A549 (cell line): ENCODE measurements at regions of chr12 and their contacts with region 1.

Region 1: DNA sequence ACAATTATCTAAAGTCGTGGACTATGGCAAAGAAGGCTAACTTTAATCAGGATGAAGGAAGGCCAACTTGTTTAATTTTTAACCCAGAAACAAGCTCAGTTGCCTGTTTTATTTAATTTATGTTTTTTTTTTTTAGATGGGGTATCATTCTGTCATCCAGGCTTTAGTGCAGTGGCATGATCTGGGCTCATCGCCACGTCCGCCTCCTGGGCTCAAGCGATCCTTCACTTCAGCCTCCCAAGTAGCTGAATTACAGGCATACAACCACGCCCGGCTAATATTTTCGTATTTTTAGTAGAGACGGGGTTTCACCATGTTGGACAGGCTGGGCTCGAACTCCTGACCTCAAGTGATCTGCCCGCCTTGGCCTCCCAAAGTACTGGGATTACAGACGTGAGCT is 19.7 kb downstream of the NUDT4 start:
- DNase-seq: no peak
- ATAC-seq: no peak
- H3K4me3 ChIP-seq: no peak overlapping the region
- H3K27ac ChIP-seq: no peak overlapping the region
- H3K4me1 ChIP-seq: no peaks in the 10 kb centered on the region
- CTCF ChIP-seq: no peak
- EP300 ChIP-seq: no peak
- POLR2A ChIP-seq: no peak
- RAD21 ChIP-seq: no peak

Region 2: GRCh38 chr12:92784795-92785562 is 612.4 kb before region 1 on chr12:
- CTCF ChIA-PET with region 1: interaction called, 10 read pairs
- POLR2A ChIA-PET with region 1: interaction called, 5 read pairs
- DNase-seq: peak; percentile 67 to 82
- ATAC-seq: peak; percentile 100
- H3K4me3 ChIP-seq: no peak overlapping the region
- H3K27ac ChIP-seq: no peak overlapping the region
- H3K4me1 ChIP-seq: peaks cover 8% of the 10 kb centered on the region; the same call in 1 of the 3 replicates
- CTCF ChIP-seq: peak; percentile 81
- EP300 ChIP-seq: no peak
- POLR2A ChIP-seq: no peak
- RAD21 ChIP-seq: peak; percentile 88 to 93

Region 3: DNA sequence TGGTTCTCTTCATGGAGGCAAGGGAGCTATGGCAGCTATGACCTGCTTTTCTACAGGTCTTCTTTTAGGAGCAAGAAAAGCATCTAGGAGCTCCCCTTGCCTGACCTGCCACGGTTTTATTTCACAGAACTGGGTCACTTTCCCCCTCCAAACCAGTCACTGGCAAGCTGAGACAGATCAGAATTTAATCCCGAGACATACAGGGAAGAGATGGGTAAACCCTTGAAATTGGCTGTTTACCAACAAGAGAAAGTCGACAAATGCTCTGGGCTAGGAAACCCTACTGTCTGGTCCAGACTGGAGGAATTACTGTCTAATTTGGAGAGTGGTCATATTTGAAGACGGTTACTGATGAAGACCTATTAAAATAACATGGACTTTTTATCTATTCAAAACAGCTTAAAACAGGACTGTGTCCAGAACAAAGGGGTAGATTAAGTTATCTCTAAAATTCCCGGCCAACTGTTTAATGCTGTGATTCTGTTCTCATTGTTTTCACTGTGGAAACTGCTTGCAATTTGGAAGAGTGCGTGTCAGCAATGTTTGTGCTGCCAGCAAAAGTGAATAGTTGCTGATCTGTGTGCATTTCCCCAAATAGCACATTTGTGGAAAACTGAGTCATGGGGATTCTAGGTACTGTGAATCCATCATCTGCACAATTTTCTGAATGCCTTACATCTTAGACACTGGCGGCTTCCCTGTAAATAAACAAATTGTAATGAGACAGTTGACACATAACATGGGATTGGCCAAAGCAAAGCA is 394.9 kb before region 1 on chr12:
- CTCF ChIA-PET with region 1: interaction called, 10 read pairs
- POLR2A ChIA-PET with region 1: no interaction called
- DNase-seq: no peak
- ATAC-seq: no peak
- H3K4me3 ChIP-seq: no peak overlapping the region
- H3K27ac ChIP-seq: no peak overlapping the region
- H3K4me1 ChIP-seq: no peaks in the 10 kb centered on the region
- CTCF ChIP-seq: no peak
- EP300 ChIP-seq: no peak
- POLR2A ChIP-seq: no peak
- RAD21 ChIP-seq: no peak

Region 4: DNA sequence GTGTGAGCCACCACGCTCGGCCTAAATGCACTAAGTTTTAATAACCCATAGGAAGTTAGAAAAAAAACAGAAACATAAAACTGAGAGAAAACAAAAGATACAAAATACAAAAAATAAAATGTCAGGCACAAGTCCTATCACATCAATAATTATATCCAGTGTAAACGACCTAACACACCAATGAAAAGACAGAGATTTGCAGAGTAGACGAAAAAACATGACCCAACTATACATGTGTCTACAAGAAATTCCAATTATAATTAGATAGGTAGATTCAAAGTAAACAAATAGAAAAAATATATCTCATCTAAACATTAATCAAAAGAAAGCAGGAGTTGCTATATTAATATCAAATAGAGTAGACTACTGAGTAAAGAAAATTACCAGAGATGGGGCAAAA is 89.1 kb before region 1 on chr12:
- CTCF ChIA-PET with region 1: no interaction called
- POLR2A ChIA-PET with region 1: no interaction called
- DNase-seq: no peak
- ATAC-seq: no peak
- H3K4me3 ChIP-seq: no peak overlapping the region
- H3K27ac ChIP-seq: no peak overlapping the region
- H3K4me1 ChIP-seq: no peaks in the 10 kb centered on the region
- CTCF ChIP-seq: no peak
- EP300 ChIP-seq: no peak
- POLR2A ChIP-seq: no peak
- RAD21 ChIP-seq: no peak

Region 5: DNA sequence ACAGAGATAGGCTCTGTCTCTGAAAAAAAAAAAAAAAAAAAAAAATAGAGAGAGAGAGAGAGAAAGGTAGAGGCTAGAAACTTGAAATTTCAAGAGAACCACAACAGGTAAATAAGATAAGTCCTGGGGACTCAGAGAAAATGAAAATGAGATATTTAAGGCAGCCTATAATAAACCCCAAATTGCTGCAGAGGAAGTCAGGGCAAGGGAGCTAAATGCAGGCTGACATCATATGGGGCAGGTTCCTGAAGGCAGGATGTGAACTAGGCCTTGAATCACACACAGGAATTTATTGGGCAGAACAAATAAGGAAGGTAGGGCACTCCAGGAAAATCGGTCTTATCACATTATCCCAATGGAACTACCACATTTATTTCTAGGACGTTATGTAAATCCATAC is 74.6 kb before region 1 on chr12:
- CTCF ChIA-PET with region 1: no interaction called
- POLR2A ChIA-PET with region 1: no interaction called
- DNase-seq: peak in 1 of 2 experiments; percentile 12
- ATAC-seq: no peak; a peak in 1 of 6 replicates
- H3K4me3 ChIP-seq: no peak overlapping the region
- H3K27ac ChIP-seq: no peak overlapping the region
- H3K4me1 ChIP-seq: no peaks in the 10 kb centered on the region
- CTCF ChIP-seq: no peak
- EP300 ChIP-seq: no peak
- POLR2A ChIP-seq: no peak
- RAD21 ChIP-seq: no peak

Region 6: GRCh38 chr12:93363841-93364297 is 33.5 kb before region 1 on chr12:
- CTCF ChIA-PET with region 1: no interaction called
- POLR2A ChIA-PET with region 1: no interaction called
- DNase-seq: no peak
- ATAC-seq: no peak
- H3K4me3 ChIP-seq: no peak overlapping the region
- H3K27ac ChIP-seq: no peak overlapping the region
- H3K4me1 ChIP-seq: no peaks in the 10 kb centered on the region
- CTCF ChIP-seq: no peak
- EP300 ChIP-seq: no peak
- POLR2A ChIP-seq: no peak
- RAD21 ChIP-seq: no peak

Region 7: DNA sequence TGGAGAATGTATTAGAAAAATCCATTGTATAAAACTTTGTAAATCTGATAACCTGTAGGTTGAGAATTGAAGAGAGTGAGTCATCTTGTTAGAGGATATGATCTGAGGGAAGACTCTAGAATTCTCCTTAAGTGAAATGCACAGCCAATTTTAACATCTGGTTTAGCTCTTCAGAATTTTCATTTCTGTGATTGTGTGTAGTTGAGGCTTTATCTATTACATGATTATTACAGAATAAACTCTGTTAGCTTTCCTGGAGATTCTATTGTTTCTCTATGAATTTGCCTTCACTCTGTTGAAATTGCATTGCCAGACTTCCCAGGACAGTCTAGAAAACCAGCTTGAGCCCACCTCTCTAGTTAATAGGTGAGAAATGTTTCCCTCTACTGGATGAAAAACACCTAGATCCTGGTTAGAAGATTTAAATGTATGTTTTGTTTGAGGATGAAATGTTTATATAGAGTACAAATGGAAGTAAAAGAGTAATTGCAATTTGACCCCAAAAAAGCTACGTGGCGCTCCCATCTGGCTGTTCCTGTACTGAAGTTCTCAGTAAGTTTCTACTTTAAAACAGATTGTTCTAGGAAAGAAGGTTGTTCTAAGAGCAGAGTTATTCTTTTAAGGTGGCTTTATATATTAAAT is 16.8 kb before region 1 on chr12:
- CTCF ChIA-PET with region 1: interaction called, 63 read pairs
- POLR2A ChIA-PET with region 1: no interaction called
- DNase-seq: peak in 1 of 2 experiments; percentile 40
- ATAC-seq: no peak
- H3K4me3 ChIP-seq: peak overlapping the region; percentile 64; the same call in 1 of the 3 replicates
- H3K27ac ChIP-seq: no peak overlapping the region
- H3K4me1 ChIP-seq: peaks cover 32% of the 10 kb centered on the region
- CTCF ChIP-seq: peak; percentile 45
- EP300 ChIP-seq: no peak
- POLR2A ChIP-seq: no peak
- RAD21 ChIP-seq: peak; percentile 58 to 59

Region 8: DNA sequence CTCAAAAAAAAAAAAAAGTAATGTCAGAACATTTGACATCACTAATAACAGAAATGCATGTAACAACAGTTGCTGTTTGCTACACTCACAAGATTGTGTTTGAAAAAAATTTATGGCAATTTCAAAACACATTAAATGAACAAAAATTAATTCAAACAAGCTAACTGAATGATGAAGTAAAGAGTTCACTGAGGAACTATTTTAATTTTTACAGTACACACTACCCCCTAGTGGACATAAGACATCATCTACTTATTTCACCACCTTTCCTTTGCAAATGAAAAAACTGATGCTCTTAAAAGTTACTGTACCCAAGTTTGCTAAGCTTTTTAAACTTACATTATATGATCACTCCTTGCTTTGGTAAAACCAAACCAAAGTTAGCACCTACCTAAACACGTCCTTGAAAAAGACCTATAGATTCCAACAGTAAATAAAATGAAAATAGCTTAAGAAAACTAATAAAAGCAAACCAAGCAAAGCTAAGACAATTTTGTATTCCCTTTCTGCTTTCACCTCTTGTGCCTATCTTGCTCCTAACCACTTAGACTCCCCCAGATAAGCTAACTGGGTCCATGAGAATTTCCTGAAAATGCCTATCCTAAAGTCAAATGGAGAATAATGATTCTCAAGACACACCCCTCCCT is 22.1 kb after region 1 on chr12:
- CTCF ChIA-PET with region 1: interaction called, 21 read pairs
- POLR2A ChIA-PET with region 1: no interaction called
- DNase-seq: peak; percentile 58 to 59
- ATAC-seq: peak in 1 of 2 experiments; percentile 79; a peak in 3 of 6 replicates
- H3K4me3 ChIP-seq: no peak overlapping the region
- H3K27ac ChIP-seq: no peak overlapping the region
- H3K4me1 ChIP-seq: peaks cover 27% of the 10 kb centered on the region; the same call in 2 of the 3 replicates
- CTCF ChIP-seq: peak; percentile 73
- EP300 ChIP-seq: no peak
- POLR2A ChIP-seq: no peak
- RAD21 ChIP-seq: peak; percentile 41 to 50; a peak in 3 of 5 replicates